ENCODE measurements at regions of chr21 and their contacts with region 1.

Region 1: DNA sequence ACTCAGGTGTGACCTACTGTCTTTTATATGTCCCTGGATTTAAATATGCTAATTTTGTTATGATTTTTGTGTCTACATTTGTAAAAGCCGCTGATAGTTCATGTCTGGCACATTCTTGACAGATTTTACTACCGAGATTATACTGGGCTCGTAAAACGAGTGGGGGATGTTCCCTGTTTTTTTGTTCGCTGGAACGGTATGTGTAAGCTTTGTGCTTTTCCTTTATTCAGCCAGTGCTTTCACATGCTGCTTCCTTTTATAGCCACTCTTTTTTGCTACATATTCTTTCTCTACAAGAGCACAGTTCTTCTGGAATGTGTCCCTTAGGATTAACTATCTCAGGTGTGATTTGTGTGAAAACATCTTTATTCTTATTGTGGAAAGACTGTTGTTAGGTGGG is 46.6 kb downstream of the ADARB1 start:
- DNase-seq: no peak
- H3K4me3 ChIP-seq: no peak overlapping the region
- H3K27ac ChIP-seq: peak overlapping the region in 3 of 4 donors; percentile 3 to 60 (median 45)
- H3K4me1 ChIP-seq: peaks cover 7 to 70% (median 44%) of the 10 kb centered on the region in 4 donors
- H3K27me3 ChIP-seq: no peaks in the 10 kb centered on the region
- CTCF ChIP-seq: no peak
- EP300 ChIP-seq: no peak
- POLR2A ChIP-seq: no peak

Region 2: DNA sequence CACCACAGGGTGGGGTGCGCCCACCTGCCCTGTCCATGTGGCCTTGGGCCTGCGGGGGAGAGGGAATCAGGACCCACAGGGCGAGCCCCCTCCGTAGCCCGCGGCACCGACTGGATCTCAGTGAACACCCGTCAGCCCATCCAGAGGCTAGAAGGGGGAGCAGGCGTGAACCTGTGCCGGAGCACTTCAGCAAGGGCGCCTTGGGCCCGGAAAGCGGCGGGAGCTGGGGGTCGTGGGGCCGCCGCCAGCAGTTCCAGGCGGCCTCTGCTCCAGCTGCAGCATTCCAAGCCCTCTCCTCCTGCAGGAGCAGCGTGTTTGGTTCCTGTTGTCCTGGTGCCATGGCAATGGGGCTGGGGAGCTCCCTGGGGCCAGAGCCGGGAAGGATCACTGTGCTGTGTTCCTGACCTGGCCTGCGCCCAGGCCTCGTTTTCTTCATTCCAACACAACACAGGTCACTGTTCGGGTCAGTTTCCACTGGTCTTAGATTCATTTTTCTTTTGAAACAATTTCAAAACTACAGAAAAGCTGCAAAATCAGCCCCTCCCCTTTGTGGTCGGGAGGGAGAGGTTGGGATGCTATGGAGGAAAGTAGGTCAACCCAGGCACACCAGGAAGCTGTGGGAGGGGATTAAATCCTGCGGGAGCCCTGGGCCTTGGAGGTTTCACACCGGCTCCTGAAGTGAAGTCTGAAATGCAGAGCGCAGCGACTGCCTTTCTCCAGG is 162.3 kb before region 1 on chr21:
- intact Hi-C with region 1: no loop called
- DNase-seq: no peak
- H3K4me3 ChIP-seq: peak overlapping the region; percentile 30 to 42 (median 34)
- H3K27ac ChIP-seq: peak overlapping the region; percentile 80 to 92 (median 85)
- H3K4me1 ChIP-seq: peaks cover 77 to 90% (median 79%) of the 10 kb centered on the region in 4 donors
- H3K27me3 ChIP-seq: no peaks in the 10 kb centered on the region
- CTCF ChIP-seq: no peak
- EP300 ChIP-seq: no peak
- POLR2A ChIP-seq: no peak

Region 3: DNA sequence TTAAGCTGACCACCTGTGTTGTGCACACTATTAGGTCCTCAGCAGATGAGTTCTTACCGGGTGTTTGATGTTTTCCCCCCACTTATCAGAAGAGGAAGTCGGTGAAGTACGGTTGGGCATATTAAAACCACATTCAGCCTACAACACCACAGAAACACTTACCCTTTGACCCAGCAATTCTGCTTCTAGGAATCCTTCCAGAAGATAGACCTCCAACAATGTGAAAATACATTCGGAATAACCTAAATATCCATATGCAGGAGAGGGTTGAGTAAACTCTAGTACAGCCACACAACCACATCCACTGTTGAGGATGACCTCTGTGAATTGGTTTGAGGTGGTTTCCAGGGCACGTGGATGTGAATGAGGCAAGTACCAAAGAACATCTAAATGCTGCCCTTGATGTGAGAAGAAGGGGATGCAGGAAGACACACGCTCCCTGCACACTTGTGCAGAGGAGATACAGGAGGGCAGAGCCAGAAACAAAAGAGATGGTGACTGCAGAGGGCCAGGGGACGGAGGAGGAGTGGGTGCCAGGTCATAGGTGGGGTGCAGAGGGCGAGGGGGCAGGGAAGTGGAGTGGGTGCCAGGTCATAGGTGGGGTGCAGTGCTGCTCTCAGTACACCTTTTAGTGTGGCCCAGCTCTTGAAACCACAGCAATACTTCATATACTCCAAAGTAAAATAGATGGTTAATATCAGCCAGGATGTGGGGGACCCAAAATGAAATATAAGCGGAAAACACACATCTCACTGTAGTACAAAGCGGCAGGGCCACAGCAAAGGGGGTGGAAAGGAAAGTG is 33.8 kb before region 1 on chr21:
- intact Hi-C with region 1: loop called (anchors 5 kb)
- DNase-seq: no peak
- H3K4me3 ChIP-seq: no peak overlapping the region
- H3K27ac ChIP-seq: peak overlapping the region in 1 of 4 donors; percentile 9
- H3K4me1 ChIP-seq: peaks cover 11 to 100% (median 78%) of the 10 kb centered on the region in 4 donors
- H3K27me3 ChIP-seq: no peaks in the 10 kb centered on the region
- CTCF ChIP-seq: no peak
- EP300 ChIP-seq: no peak
- POLR2A ChIP-seq: no peak

Region 4: GRCh38 chr21:45167796-45168222 is 46.8 kb after region 1 on chr21:
- intact Hi-C with region 1: no loop called
- DNase-seq: no peak
- H3K4me3 ChIP-seq: no peak overlapping the region
- H3K27ac ChIP-seq: peak overlapping the region; percentile 64 to 70 (median 64)
- H3K4me1 ChIP-seq: peaks cover 27 to 78% (median 72%) of the 10 kb centered on the region in 4 donors
- H3K27me3 ChIP-seq: no peaks in the 10 kb centered on the region
- CTCF ChIP-seq: peak in 2 of 3 experiments; percentile 18 to 21
- EP300 ChIP-seq: no peak
- POLR2A ChIP-seq: no peak

Measured in esophagus muscularis mucosa (tissue), 4 donors.